Esophagus muscularis mucosa (tissue), 4 donors: ENCODE measurements at regions of chr6 and their contacts with region 1.

Region 1: GRCh38 chr6:2209226-2209809 is 36.1 kb downstream of the GMDS start:
- DNase-seq: no peak
- H3K4me3 ChIP-seq: no peak overlapping the region
- H3K27ac ChIP-seq: no peak overlapping the region
- H3K4me1 ChIP-seq: no peaks in the 10 kb centered on the region
- H3K27me3 ChIP-seq: no peaks in the 10 kb centered on the region
- CTCF ChIP-seq: peak; percentile 30 to 39 (median 33)
- EP300 ChIP-seq: no peak
- POLR2A ChIP-seq: no peak

Region 2: DNA sequence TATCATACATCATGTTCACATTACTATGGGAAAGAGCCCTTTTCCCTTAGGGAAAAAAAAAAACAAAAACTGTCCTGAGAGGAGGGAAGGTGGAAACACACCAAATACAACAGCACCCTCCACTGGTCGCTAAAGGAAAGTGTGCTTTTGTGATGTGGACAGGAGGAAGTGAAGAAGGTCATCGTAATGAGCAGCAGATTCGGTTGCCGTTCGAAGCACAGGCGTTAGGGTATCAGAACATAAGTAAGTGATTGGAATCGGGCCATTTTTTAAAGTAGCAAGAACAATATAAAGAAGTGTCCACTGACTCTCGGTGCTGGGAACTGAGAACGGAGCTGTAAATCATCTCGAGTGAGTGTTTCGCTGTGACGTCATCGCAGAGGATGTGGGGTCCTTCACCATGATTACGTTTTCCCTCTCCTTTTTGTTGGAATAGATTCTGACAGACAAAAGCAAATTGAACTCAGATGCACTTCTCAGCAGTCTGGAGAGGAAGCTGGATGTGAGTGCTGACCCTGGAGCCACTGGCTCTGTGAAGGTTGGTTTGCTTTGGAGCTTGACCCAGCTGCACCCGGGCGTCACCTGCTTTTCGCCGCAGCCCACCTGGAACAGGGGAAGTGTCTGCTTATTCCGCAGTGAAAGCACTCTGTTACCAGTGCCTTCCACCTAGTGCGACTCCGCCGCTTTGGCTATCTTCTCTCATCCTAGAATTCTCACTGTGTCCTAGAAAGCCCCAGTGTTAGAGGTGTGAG is 239.7 kb after region 1 on chr6:
- intact Hi-C with region 1: loop called (anchors 5 kb)
- DNase-seq: no peak
- H3K4me3 ChIP-seq: peak overlapping the region; percentile 11 to 49 (median 34)
- H3K27ac ChIP-seq: no peak overlapping the region
- H3K4me1 ChIP-seq: peaks cover 6 to 19% (median 9%) of the 10 kb centered on the region in 4 donors
- H3K27me3 ChIP-seq: no peaks in the 10 kb centered on the region
- CTCF ChIP-seq: peak; percentile 53 to 73 (median 68)
- EP300 ChIP-seq: no peak
- POLR2A ChIP-seq: no peak